ENCODE measurements at regions of chr7 and their contacts with region 1.

Region 1: GRCh38 chr7:91899563-91899962 is 19.1 kb upstream of the MTERF1 start:
- DNase-seq: no peak
- H3K4me3 ChIP-seq: no peak overlapping the region
- H3K27ac ChIP-seq: no peak overlapping the region
- H3K4me1 ChIP-seq: no peaks in the 10 kb centered on the region
- H3K27me3 ChIP-seq: no peaks in the 10 kb centered on the region
- CTCF ChIP-seq: no peak

Region 2: DNA sequence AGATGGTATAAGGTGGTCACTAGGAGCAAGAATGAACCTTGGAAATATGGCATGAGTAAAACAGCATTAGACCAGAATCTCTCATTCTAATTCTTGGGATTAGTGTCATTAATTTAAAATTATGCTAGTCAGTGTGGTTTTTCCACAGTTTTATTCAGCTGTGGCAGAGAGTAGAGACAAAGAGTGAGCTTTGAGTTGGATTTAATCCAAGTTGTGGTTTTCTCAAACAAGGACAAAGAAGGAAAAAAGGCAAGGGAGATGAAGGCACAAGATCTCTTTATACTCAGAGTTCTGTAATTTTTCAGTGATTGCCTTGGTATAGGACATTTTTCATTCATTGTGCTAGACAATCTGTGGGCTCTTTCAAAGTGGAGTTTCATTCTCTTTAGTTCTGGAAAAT is 12.9 kb after region 1 on chr7:
- CTCF ChIA-PET with region 1: no interaction called
- POLR2A ChIA-PET with region 1: no interaction called
- intact Hi-C with region 1: loop called (anchors 1 kb)
- DNase-seq: no peak
- H3K4me3 ChIP-seq: no peak overlapping the region
- H3K27ac ChIP-seq: no peak overlapping the region
- H3K4me1 ChIP-seq: no peaks in the 10 kb centered on the region
- H3K27me3 ChIP-seq: no peaks in the 10 kb centered on the region
- CTCF ChIP-seq: no peak

Measured in PC-9 (cell line).